Right cardiac atrium (tissue), 5 donors: ENCODE measurements at regions of chrX and their contacts with region 1.

Region 1: DNA sequence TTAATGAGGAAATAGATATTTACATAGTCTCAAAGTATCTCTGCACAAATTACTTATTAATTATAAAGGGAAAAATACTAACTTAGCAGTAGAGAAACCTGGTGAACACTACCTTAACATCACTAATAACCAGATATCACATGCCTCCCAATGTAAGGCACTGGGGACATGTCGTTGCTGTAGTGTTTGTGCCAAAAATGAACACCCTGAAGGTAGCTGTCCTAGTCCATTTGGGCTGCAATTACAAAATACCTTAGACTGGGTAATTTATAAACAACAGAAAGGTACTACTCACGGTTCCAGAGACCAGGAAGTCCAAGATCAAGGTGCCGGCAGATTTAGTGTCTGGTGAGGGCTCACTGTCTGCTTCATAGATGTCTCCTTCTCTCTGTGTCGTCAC is 10.7 kb upstream of the MPC1L start:
- DNase-seq: no peak
- ATAC-seq: no peak
- H3K4me3 ChIP-seq: no peak overlapping the region
- H3K27ac ChIP-seq: no peak overlapping the region
- H3K4me1 ChIP-seq: no peaks in the 10 kb centered on the region
- H3K27me3 ChIP-seq: no peaks in the 10 kb centered on the region

Region 2: DNA sequence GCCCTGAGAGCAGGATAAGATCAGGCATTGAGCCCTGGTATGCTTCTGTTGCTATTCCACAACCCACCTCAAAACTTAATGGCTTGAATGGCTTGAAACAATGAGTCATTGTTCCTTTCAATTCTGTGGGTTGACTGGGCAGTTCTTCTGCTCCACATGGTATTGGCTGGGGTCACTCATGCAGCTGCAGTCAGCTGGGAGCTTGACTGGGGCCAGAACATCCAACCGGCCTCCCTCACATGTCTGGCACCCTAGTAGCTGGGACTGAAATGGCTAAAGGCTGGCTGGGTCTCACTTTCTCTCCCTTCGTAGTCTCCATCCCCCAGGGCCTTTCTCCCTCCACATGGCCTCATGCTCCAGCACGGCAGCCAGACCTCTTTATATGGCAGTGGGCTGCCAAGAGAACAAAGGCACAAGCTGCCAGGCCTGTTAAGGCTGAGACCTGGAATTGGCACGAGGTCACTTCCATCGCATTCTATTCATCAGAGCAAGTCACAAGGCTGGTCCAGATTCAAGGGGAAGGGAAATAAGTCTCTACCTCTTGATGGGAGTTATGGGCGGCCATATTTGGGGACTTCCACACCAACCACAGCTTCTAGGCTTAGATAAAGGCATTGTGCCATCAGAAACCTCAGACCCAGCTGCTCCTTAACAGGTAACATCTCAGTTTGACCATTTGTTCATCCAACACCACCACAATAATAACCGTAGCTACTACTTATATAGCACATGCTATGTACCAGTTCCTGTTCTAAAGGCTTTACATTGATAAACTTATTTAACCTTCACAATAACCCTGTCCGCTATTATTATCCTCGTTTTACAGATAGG is 191.4 kb before region 1 on chrX:
- intact Hi-C with region 1: no loop called
- DNase-seq: peak; percentile 40 to 74 (median 65)
- ATAC-seq: peak; percentile 71 to 78
- H3K4me3 ChIP-seq: no peak overlapping the region
- H3K27ac ChIP-seq: no peak overlapping the region
- H3K4me1 ChIP-seq: no peaks in the 10 kb centered on the region
- H3K27me3 ChIP-seq: no peaks in the 10 kb centered on the region

Region 3: DNA sequence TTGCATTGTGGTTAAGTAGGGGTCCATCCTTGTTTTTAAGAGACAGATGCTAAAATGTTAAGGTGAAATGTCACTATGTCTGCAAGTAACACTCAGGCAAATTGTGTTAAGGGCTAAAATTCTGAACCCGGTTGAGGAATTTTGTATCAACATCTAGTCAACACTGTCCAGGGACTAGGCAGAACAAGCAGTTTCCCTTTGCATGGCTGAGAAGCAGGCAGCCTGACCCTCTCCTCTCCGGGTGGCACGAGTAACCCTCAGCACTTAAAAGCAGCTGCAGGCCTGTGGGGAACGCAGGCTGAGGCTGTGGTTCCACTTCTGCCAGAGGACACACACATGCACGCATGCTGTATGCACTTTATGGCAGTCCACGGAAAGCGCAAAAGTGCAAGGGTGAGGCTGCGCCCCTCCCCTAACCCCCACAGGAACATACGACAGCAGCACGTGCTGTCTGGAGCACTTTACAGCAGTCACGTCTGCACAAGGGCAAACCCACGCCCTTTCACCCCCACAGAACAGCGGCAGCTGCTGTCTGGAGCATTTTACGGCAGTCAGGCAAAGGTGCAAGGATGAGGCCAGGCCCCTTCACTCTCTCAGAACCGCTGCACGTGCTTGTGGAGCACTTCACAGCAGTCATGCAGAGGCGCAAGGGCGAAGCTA is 10.1 kb after region 1 on chrX:
- intact Hi-C with region 1: loop called in 1 of 4 experiments (anchors 2 kb)
- DNase-seq: no peak
- ATAC-seq: no peak
- H3K4me3 ChIP-seq: no peak overlapping the region
- H3K27ac ChIP-seq: no peak overlapping the region
- H3K4me1 ChIP-seq: peaks cover 1% of the 10 kb centered on the region
- H3K27me3 ChIP-seq: no peaks in the 10 kb centered on the region

Region 4: DNA sequence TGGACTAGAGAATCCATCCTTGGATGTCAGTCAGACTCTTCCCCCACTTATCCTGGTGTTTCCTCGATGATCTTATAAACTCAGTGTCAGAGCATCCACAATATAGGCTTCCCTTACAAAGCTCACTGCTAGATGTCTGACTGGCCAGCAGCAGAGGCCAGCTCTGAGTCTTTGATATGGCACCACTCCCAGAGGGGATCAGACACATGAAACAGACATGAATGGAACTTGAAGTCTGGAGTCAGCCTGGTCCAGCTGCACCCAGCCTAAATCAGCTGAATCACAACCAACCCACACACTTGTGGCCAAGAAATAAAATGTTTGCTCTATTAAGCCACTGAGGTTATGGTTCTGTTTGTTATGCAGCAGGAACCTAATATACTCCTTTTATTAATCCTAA is 252.5 kb after region 1 on chrX:
- intact Hi-C with region 1: no loop called
- DNase-seq: no peak
- ATAC-seq: no peak
- H3K4me3 ChIP-seq: no peak overlapping the region
- H3K27ac ChIP-seq: no peak overlapping the region
- H3K4me1 ChIP-seq: peaks cover 2% of the 10 kb centered on the region
- H3K27me3 ChIP-seq: no peaks in the 10 kb centered on the region